ENCODE measurements at regions of chr3 and their contacts with region 1.

Region 1: GRCh38 chr3:193788189-193788991 is 195.4 kb downstream of the OPA1 start:
- DNase-seq: peak; percentile 9
- ATAC-seq: peak; percentile 98
- H3K4me3 ChIP-seq: no peak overlapping the region
- H3K27ac ChIP-seq: no peak overlapping the region
- H3K4me1 ChIP-seq: no peaks in the 10 kb centered on the region
- H3K27me3 ChIP-seq: no peaks in the 10 kb centered on the region; a peak in 1 of 4 replicates
- CTCF ChIP-seq: peak; percentile 69 to 76 (median 76)
- EP300 ChIP-seq: no peak
- POLR2A ChIP-seq: no peak
- RAD21 ChIP-seq: peak; percentile 85

Region 2: DNA sequence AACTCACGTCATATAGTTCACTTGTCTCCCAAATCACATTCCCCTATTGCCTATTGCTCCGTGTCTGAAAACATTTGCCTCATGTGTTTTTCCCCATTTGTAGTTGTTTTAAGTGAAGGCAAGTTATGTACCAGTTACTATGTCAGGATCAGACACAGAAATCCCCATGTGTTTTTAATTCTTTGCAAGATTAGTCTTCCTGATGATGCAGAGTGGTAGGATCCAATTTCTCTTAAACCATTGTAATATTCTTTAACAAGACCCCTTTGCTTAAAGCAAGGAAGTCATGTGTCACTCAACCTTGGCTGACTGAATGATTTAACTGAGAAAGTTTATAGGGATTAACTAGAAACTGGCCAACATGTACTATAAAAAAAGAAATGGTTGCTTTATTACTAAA is 30.9 kb before region 1 on chr3:
- CTCF ChIA-PET with region 1: no interaction called
- POLR2A ChIA-PET with region 1: no interaction called
- RAD21 ChIA-PET with region 1: no interaction called
- SMC1A ChIA-PET with region 1: no interaction called
- in situ Hi-C with region 1: no loop called
- intact Hi-C with region 1: no loop called
- DNase-seq: no peak
- ATAC-seq: no peak
- H3K4me3 ChIP-seq: no peak overlapping the region
- H3K27ac ChIP-seq: no peak overlapping the region
- H3K4me1 ChIP-seq: no peaks in the 10 kb centered on the region
- H3K27me3 ChIP-seq: no peaks in the 10 kb centered on the region
- CTCF ChIP-seq: no peak
- EP300 ChIP-seq: no peak
- POLR2A ChIP-seq: no peak
- RAD21 ChIP-seq: no peak

Region 3: DNA sequence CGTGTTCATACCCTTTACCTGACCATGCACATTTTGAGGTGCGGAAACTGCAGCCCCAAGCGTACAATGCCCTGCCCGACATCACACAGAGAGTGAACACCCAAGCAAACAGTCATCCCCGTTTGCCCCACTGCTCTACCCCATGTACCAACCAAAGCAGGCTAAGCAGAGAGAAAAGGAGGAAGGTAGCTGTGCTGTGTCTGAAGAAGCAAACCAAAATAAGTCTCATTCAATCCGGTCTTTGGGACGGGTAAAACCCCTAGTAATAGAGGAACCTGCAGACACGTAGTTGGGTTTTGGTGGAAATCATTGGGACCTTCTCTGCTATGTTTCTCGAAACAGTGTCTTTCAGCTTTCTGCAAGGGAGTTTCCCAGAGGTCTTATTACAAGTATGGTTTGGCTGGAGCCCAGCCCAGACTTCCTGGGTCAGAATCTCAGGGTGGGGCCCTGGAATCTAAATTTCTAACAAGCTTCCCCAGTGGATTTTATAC is 182.9 kb after region 1 on chr3:
- CTCF ChIA-PET with region 1: no interaction called
- POLR2A ChIA-PET with region 1: no interaction called
- RAD21 ChIA-PET with region 1: no interaction called
- SMC1A ChIA-PET with region 1: no interaction called
- in situ Hi-C with region 1: no loop called
- intact Hi-C with region 1: loop called (anchors 10 kb)
- DNase-seq: peak; percentile 58
- ATAC-seq: peak; percentile 83
- H3K4me3 ChIP-seq: peak overlapping the region; percentile 23; the same call in 1 of the 2 replicates
- H3K27ac ChIP-seq: peak overlapping the region; percentile 35; the same call in 1 of the 2 replicates
- H3K4me1 ChIP-seq: peaks cover 14% of the 10 kb centered on the region
- H3K27me3 ChIP-seq: peaks cover 0 to 1% of the 10 kb centered on the region in 2 experiments; a peak in 2 of 4 replicates
- CTCF ChIP-seq: no peak
- EP300 ChIP-seq: no peak
- POLR2A ChIP-seq: no peak
- RAD21 ChIP-seq: no peak

Region 4: DNA sequence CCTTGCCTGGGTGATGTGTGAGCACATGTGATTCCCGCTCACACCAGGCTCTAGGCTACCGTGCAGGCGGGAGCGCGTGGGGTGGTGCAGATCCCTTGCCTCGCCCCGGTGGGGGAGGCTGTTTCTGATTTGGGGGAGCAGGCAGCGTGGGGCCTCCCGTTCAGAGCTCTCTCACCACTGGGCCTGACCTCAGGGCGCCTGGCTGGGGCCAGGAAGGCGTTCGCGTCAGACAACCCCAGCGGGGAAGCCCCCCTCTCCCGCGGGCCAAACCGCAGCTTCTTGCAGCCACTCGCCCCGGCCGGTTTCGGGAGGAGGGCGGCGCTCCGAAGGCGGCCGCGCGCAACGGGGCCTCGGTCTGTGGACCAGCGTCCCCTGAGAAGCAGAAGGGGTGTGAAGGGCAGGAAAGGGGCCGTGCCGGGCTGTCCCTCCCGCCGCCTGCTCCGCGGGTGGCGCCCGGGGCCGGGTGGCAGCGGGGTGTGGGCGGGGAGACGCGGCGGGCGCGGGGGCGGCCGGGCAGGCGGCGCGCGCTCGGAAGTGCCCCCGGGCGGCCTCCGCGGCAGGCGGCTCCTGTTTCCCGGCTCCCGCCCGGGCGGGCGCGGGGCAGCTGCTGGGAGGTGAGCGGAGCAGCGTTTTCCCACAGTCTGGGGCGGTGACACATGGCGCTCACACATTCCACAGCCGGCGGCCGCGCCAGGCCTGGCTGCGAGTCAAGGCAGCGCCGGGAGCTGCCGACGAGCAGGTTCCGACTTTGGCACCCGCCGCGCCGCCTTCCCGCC is 282.4 kb after region 1 on chr3:
- CTCF ChIA-PET with region 1: no interaction called
- POLR2A ChIA-PET with region 1: no interaction called
- RAD21 ChIA-PET with region 1: no interaction called
- SMC1A ChIA-PET with region 1: no interaction called
- in situ Hi-C with region 1: no loop called
- intact Hi-C with region 1: no loop called
- DNase-seq: peak; percentile 50
- ATAC-seq: peak; percentile 97
- H3K4me3 ChIP-seq: peak overlapping the region; percentile 42; the same call in 1 of the 2 replicates
- H3K27ac ChIP-seq: no peak overlapping the region
- H3K4me1 ChIP-seq: peaks cover 8% of the 10 kb centered on the region
- H3K27me3 ChIP-seq: peaks cover 0 to 2% of the 10 kb centered on the region in 2 experiments; a peak in 2 of 4 replicates
- CTCF ChIP-seq: no peak
- EP300 ChIP-seq: peak in 1 of 2 experiments; percentile 63; a peak in 1 of 4 replicates
- POLR2A ChIP-seq: peak; percentile 49; the same call in 1 of the 2 replicates
- RAD21 ChIP-seq: 0 out of 2 replicates have a peak, but pooled peaks have one; percentile 13

Measured in GM12878 (cell line).